HepG2 (cell line): ENCODE measurements at regions of chr10 and their contacts with region 1.

Region 1: GRCh38 chr10:131981429-131982184 is at the start of gene BNIP3:
- DNase-seq: peak; percentile 88
- ATAC-seq: peak; percentile 87
- H3K4me3 ChIP-seq: peak within 1 kb of the TSS; percentile 88 to 98 (median 91)
- H3K27ac ChIP-seq: peak within 1 kb of the TSS; percentile 64
- H3K4me1 ChIP-seq: peaks cover 53% of the 10 kb centered on the region
- H3K27me3 ChIP-seq: no peaks in the 10 kb centered on the region; a peak in 1 of 5 replicates
- CTCF ChIP-seq: no peak
- EP300 ChIP-seq: peak in 1 of 2 experiments; percentile 8; a peak in 1 of 4 replicates
- POLR2A ChIP-seq: peak; percentile 82 to 93
- RAD21 ChIP-seq: 0 out of 2 replicates have a peak, but pooled peaks have one; percentile 6
- total RNA-seq, gene BNIP3: 73.7 and 86.7 TPM in 2 replicates

Region 2: GRCh38 chr10:131900350-131901146 is 81.1 kb before region 1 on chr10 and contains the start of gene PPP2R2D:
- CTCF ChIA-PET with region 1: no interaction called
- POLR2A ChIA-PET with region 1: interaction called, 17 read pairs
- in situ Hi-C with region 1: no loop called
- intact Hi-C with region 1: loop called (anchors 5 kb)
- DNase-seq: peak; percentile 87
- ATAC-seq: peak; percentile 92
- H3K4me3 ChIP-seq: peak within 1 kb of the TSS; percentile 93 to 94 (median 94)
- H3K27ac ChIP-seq: peak within 1 kb of the TSS; percentile 80
- H3K4me1 ChIP-seq: peaks cover 72% of the 10 kb centered on the region
- H3K27me3 ChIP-seq: peaks cover 2 to 12% of the 10 kb centered on the region in 2 experiments; a peak in 3 of 5 replicates
- CTCF ChIP-seq: no peak
- EP300 ChIP-seq: no peak
- POLR2A ChIP-seq: peak; percentile 68 to 84
- RAD21 ChIP-seq: peak; percentile 37; the same call in 1 of the 2 replicates
- total RNA-seq, gene PPP2R2D: 33.2 and 34.4 TPM in 2 replicates

Region 3: GRCh38 chr10:131997366-131998049 is 15.9 kb after region 1 on chr10:
- CTCF ChIA-PET with region 1: no interaction called
- POLR2A ChIA-PET with region 1: interaction called, 49 read pairs
- in situ Hi-C with region 1: no loop called
- intact Hi-C with region 1: loop called (anchors 2 kb)
- DNase-seq: peak; percentile 92
- ATAC-seq: peak; percentile 81
- H3K4me3 ChIP-seq: peak overlapping the region; percentile 42 to 53 (median 47); a peak in 5 of 6 replicates
- H3K27ac ChIP-seq: peak overlapping the region; percentile 81
- H3K4me1 ChIP-seq: peaks cover 85% of the 10 kb centered on the region
- H3K27me3 ChIP-seq: 0 out of 5 replicates have a peak, but pooled peaks cover 0 to 2% of the 10 kb centered on the region in 2 experiments
- CTCF ChIP-seq: peak; percentile 6; the same call in 1 of the 2 replicates
- EP300 ChIP-seq: peak in 1 of 2 experiments; percentile 79; a peak in 3 of 4 replicates
- POLR2A ChIP-seq: peak in 1 of 2 experiments; percentile 48; a peak in 1 of 4 replicates
- RAD21 ChIP-seq: no peak